ENCODE measurements at regions of chr7 and their contacts with region 1.

Region 1: GRCh38 chr7:24572997-24573625 is at the start of gene PALS2:
- DNase-seq: peak; percentile 78 to 88 (median 85)
- ATAC-seq: peak; percentile 88
- H3K4me3 ChIP-seq: peak within 1 kb of the TSS; percentile 78
- H3K4me3 Mint-ChIP-seq: peak within 1 kb of the TSS; percentile 93 to 100 (median 94)
- H3K27ac ChIP-seq: peak within 1 kb of the TSS; percentile 77
- H3K27ac Mint-ChIP-seq: peak within 1 kb of the TSS; percentile 84 to 96 (median 94)
- H3K4me1 ChIP-seq: peaks cover 13 to 24% of the 10 kb centered on the region in 2 donors
- H3K4me1 Mint-ChIP-seq: peaks cover 21 to 52% (median 42%) of the 10 kb centered on the region in 7 donors
- H3K27me3 ChIP-seq: no peaks in the 10 kb centered on the region
- H3K27me3 Mint-ChIP-seq: peaks cover 0 to 45% (median 0%) of the 10 kb centered on the region in 5 donors
- total RNA-seq, gene PALS2: 15.4 to 58.4 (median 34.0) TPM

Region 2: GRCh38 chr7:23013715-23014649 is 1559.1 kb before region 1 on chr7 and contains the start of gene HYCC1:
- CTCF ChIA-PET with region 1: no interaction called
- POLR2A ChIA-PET with region 1: no interaction called
- intact Hi-C with region 1: loop called in 1 of 2 experiments (anchors 2 kb)
- DNase-seq: peak; percentile 96 to 100 (median 99)
- ATAC-seq: peak; percentile 99
- H3K4me3 ChIP-seq: peak within 1 kb of the TSS; percentile 82
- H3K4me3 Mint-ChIP-seq: peak within 1 kb of the TSS; percentile 8 to 98 (median 96)
- H3K27ac ChIP-seq: peak within 1 kb of the TSS; percentile 67
- H3K27ac Mint-ChIP-seq: peak within 1 kb of the TSS; percentile 60 to 96 (median 88)
- H3K4me1 ChIP-seq: peaks cover 5 to 15% of the 10 kb centered on the region in 2 donors
- H3K4me1 Mint-ChIP-seq: peaks cover 8 to 35% (median 27%) of the 10 kb centered on the region in 7 donors
- H3K27me3 ChIP-seq: no peaks in the 10 kb centered on the region
- H3K27me3 Mint-ChIP-seq: peaks cover 0 to 3% (median 0%) of the 10 kb centered on the region in 5 donors
- total RNA-seq, gene HYCC1: 14.2 to 67.0 (median 18.3) TPM

Region 3: DNA sequence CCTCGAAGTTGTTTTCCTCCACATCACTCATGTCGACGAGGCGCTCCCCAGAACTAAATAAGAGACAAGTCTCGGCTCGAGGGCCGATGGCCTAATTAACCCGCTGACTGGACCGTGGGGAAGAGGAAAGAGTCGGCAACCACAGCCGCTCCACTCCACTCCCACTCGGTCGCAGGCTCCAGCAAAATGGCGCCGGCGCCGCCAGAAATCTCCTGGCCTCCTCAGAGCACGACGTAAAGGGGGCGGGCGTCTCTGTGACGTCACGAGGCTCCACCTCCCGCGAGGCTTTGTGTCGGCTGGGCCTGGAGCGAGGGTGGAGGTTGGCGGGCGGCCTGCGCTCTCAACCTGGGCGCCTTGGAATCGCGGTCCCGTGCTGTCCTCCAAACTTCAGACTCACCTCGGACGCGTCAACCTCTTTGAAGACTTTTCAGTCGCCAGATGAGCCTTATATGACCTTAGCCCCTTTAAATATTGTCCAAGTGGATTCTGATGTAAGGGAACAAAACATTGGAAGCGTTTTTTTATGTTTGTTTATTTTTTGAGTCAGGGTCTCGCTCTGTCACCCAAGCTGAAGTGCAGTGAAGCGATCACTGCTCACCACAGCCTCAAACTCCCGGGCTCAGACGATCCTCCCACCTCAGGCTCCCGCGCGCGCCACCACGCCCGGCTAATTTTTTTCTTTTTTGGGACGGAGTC is 1041.2 kb before region 1 on chr7 and contains the start of gene TRA2A:
- CTCF ChIA-PET with region 1: no interaction called
- POLR2A ChIA-PET with region 1: interaction called, 5 read pairs
- intact Hi-C with region 1: loop called in 1 of 2 experiments (anchors 2 kb)
- DNase-seq: peak; percentile 93 to 97 (median 95)
- ATAC-seq: peak; percentile 96
- H3K4me3 ChIP-seq: peak within 1 kb of the TSS; percentile 80
- H3K4me3 Mint-ChIP-seq: peak within 1 kb of the TSS; percentile 89 to 100 (median 99)
- H3K27ac ChIP-seq: peak within 1 kb of the TSS; percentile 93
- H3K27ac Mint-ChIP-seq: peak within 1 kb of the TSS; percentile 98 to 100 (median 100)
- H3K4me1 ChIP-seq: peaks cover 30 to 31% of the 10 kb centered on the region in 2 donors
- H3K4me1 Mint-ChIP-seq: peaks cover 28 to 51% (median 46%) of the 10 kb centered on the region in 7 donors
- H3K27me3 ChIP-seq: no peaks in the 10 kb centered on the region
- H3K27me3 Mint-ChIP-seq: no peaks in the 10 kb centered on the region
- total RNA-seq, gene TRA2A: 131 to 263 (median 163) TPM

Region 4: DNA sequence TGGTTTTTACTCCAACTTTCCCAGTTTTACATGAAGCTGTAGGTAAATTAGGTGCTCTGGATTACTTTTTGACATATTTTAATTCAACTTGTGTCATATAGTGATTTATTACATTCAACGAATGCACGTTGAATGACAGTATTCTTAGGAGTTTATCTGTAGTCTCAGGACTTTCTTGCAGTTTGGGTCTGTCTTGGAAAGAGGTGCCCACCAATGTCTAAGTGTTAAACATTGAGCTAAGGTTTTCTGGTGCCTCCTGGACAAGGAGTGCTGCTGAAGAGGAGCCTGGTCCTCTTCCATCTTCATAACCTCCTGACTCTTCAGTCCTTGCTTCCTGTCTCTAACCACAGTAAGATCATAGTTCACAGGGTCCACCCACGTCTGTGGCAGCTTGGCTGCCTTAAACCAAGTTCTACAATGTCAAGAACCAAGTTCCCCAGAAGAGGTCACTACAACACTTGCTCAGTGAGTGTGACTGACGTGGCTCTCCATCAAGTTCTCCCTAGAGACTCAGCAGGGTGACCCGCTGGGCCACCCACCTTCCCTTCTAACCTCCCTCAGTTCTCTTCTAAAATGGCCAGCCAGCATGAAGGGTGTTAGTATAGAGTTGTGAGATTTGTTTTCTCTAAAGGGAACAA is 283.0 kb before region 1 on chr7:
- CTCF ChIA-PET with region 1: no interaction called
- POLR2A ChIA-PET with region 1: no interaction called
- intact Hi-C with region 1: loop called in 1 of 2 experiments (anchors 5 kb)
- DNase-seq: peak in 8 of 9 donors; percentile 17 to 51 (median 40)
- ATAC-seq: peak; percentile 83
- H3K4me3 ChIP-seq: no peak overlapping the region
- H3K4me3 Mint-ChIP-seq: no peak overlapping the region
- H3K27ac ChIP-seq: no peak overlapping the region
- H3K27ac Mint-ChIP-seq: no peak overlapping the region
- H3K4me1 ChIP-seq: peaks cover 0 to 5% of the 10 kb centered on the region in 2 donors
- H3K4me1 Mint-ChIP-seq: peaks cover 6 to 19% (median 12%) of the 10 kb centered on the region in 7 donors
- H3K27me3 ChIP-seq: peaks cover 0 to 16% of the 10 kb centered on the region in 2 donors
- H3K27me3 Mint-ChIP-seq: peaks cover 48 to 56% (median 50%) of the 10 kb centered on the region in 5 donors

Region 5: DNA sequence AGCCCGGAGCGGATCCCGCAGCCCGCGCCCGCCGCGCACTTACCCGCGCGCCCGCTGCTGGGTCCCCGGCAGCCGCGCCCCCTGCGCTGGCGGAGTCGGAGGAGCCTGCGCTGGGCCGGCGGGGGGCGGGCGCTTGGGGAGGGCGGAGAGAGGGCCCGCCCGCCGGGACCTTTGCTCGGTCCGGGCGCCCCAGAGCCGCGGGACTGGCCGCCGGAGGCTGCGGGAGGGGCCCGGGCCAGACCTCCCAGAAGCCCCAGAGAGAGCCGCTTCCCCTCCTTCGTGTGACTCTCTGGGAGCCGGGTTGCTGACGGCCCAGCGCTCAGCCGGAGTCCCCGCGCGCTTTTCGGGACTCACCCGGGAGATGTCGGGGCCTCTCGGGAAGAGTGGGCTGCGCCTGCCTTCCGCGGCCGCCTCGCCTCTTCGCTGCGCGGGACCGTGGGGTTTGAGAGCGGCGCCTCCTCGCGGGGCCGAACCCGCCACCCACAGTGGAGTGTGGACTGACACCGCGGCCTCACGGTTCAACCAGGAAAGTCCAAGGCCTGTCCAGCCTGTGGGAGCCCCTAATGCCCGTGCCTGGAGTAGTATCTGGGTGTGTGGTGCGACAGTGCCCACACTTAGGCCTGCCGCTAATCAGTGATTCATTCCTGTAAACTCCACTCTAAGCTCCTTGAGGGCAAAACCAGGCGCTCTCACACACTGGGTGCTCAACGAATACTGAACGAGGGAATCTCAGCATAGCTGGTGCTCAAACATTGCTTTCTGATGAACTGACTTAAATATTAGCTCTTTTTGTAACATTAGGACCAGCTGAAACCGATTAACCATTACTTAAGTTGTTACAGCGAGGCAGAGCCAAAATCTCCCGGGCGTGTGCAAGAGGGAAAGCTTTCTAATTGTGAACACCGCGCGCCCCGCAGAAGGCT is 184.5 kb after region 1 on chr7 and contains the start of gene GSDME:
- CTCF ChIA-PET with region 1: no interaction called
- POLR2A ChIA-PET with region 1: no interaction called
- intact Hi-C with region 1: loop called (anchors 1 to 2 kb)
- DNase-seq: peak in 7 of 9 donors; percentile 10 to 67 (median 14)
- ATAC-seq: peak; percentile 73
- H3K4me3 ChIP-seq: peak within 1 kb of the TSS; percentile 46
- H3K4me3 Mint-ChIP-seq: peak within 1 kb of the TSS; percentile 74 to 94 (median 84)
- H3K27ac ChIP-seq: no peak within 1 kb of the TSS
- H3K27ac Mint-ChIP-seq: peak within 1 kb of the TSS in 3 of 9 donors; percentile 11 to 43 (median 38)
- H3K4me1 ChIP-seq: peaks cover 5 to 10% of the 10 kb centered on the region in 2 donors
- H3K4me1 Mint-ChIP-seq: peaks cover 9 to 30% (median 24%) of the 10 kb centered on the region in 7 donors
- H3K27me3 ChIP-seq: peaks cover 3 to 7% of the 10 kb centered on the region in 2 donors
- H3K27me3 Mint-ChIP-seq: peaks cover 42 to 67% (median 53%) of the 10 kb centered on the region in 5 donors
- total RNA-seq, gene GSDME: 0.42 to 5.0 (median 0.92) TPM

Region 6: GRCh38 chr7:25125137-25125946 is 552.2 kb after region 1 on chr7 and contains the start of gene CYCS:
- CTCF ChIA-PET with region 1: no interaction called
- POLR2A ChIA-PET with region 1: interaction called, 3 read pairs
- intact Hi-C with region 1: loop called (anchors 1 to 10 kb)
- DNase-seq: peak; percentile 97 to 100 (median 99)
- ATAC-seq: peak; percentile 96
- H3K4me3 ChIP-seq: peak within 1 kb of the TSS; percentile 74
- H3K4me3 Mint-ChIP-seq: peak within 1 kb of the TSS; percentile 88 to 100 (median 100)
- H3K27ac ChIP-seq: peak within 1 kb of the TSS; percentile 93
- H3K27ac Mint-ChIP-seq: peak within 1 kb of the TSS; percentile 98 to 100 (median 100)
- H3K4me1 ChIP-seq: peaks cover 7 to 13% of the 10 kb centered on the region in 2 donors
- H3K4me1 Mint-ChIP-seq: peaks cover 15 to 40% (median 23%) of the 10 kb centered on the region in 7 donors
- H3K27me3 ChIP-seq: no peaks in the 10 kb centered on the region
- H3K27me3 Mint-ChIP-seq: peaks cover 0 to 5% (median 0%) of the 10 kb centered on the region in 5 donors
- total RNA-seq, gene CYCS: 40.4 to 130 (median 114) TPM

Region 7: GRCh38 chr7:25347360-25348066 is 774.4 kb after region 1 on chr7:
- CTCF ChIA-PET with region 1: no interaction called
- POLR2A ChIA-PET with region 1: no interaction called
- intact Hi-C with region 1: no loop called
- DNase-seq: no peak
- ATAC-seq: no peak
- H3K4me3 ChIP-seq: no peak overlapping the region
- H3K4me3 Mint-ChIP-seq: no peak overlapping the region
- H3K27ac ChIP-seq: no peak overlapping the region
- H3K27ac Mint-ChIP-seq: no peak overlapping the region
- H3K4me1 ChIP-seq: no peaks in the 10 kb centered on the region
- H3K4me1 Mint-ChIP-seq: peaks cover 0 to 1% (median 0%) of the 10 kb centered on the region in 7 donors
- H3K27me3 ChIP-seq: no peaks in the 10 kb centered on the region
- H3K27me3 Mint-ChIP-seq: peaks cover 4 to 26% (median 10%) of the 10 kb centered on the region in 5 donors

Region 8: DNA sequence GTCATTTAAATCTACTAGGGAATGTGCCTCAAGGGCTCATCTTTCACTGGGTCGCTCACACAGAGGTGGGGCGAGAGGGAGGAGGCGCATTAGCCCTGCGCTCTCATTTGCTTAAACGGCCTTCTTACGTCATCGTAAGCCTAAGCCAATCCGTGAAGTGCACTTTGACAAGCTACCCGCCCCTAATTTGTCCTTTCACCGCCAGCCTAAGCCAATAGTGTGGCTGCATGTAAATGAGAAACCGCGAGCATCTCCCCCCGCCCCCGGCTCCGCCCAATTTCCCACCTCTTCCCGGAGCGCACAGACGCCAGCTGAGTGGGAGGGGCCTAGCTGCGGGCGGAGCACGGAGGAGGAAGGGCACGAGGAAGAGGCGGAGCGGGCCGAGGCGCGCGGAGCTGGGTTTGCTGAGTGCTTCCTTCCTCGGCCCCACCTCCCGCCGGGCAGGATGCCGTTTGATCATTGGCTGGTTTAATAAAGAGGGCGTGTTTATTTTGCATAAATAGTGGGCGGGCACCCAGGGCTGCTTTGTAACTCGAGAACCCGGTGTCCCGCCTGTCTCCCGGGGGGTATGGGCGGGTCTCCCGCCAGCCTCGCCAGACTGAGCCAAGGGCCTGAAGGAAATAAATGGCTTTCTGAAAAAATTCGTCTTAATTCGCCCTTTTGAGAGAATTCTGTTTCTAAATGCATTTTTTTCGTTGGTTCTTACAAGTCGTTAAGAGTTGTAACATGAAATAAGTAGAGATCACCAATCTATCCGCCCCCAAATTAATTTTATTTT is 1289.3 kb after region 1 on chr7:
- CTCF ChIA-PET with region 1: no interaction called
- POLR2A ChIA-PET with region 1: no interaction called
- intact Hi-C with region 1: loop called (anchors 10 kb)
- DNase-seq: peak; percentile 32 to 95 (median 49)
- ATAC-seq: peak; percentile 93
- H3K4me3 ChIP-seq: peak overlapping the region; percentile 4
- H3K4me3 Mint-ChIP-seq: peak overlapping the region in 8 of 10 donors; percentile 38 to 87 (median 61)
- H3K27ac ChIP-seq: no peak overlapping the region
- H3K27ac Mint-ChIP-seq: peak overlapping the region in 8 of 9 donors; percentile 14 to 88 (median 84)
- H3K4me1 ChIP-seq: peaks cover 0 to 6% of the 10 kb centered on the region in 2 donors
- H3K4me1 Mint-ChIP-seq: peaks cover 8 to 46% (median 20%) of the 10 kb centered on the region in 7 donors
- H3K27me3 ChIP-seq: peaks cover 35 to 87% of the 10 kb centered on the region in 2 donors
- H3K27me3 Mint-ChIP-seq: peaks cover 23 to 82% (median 62%) of the 10 kb centered on the region in 5 donors

Measured in naive thymus-derived CD4-positive, alpha-beta T cell (primary cell).